ENCODE measurements at regions of chr6 and their contacts with region 1.

Region 1: GRCh38 chr6:132300323-132300949 is 100.8 kb downstream of the MOXD1 start:
- H3K4me3 ChIP-seq: no peak overlapping the region
- H3K27ac ChIP-seq: no peak overlapping the region
- H3K4me1 ChIP-seq: no peaks in the 10 kb centered on the region
- CTCF ChIP-seq: no peak

Region 2: GRCh38 chr6:132190097-132190814 is 110.2 kb before region 1 on chr6:
- CTCF ChIA-PET with region 1: no interaction called
- POLR2A ChIA-PET with region 1: no interaction called
- H3K4me3 ChIP-seq: no peak overlapping the region
- H3K27ac ChIP-seq: no peak overlapping the region
- H3K4me1 ChIP-seq: no peaks in the 10 kb centered on the region
- CTCF ChIP-seq: no peak

Region 3: DNA sequence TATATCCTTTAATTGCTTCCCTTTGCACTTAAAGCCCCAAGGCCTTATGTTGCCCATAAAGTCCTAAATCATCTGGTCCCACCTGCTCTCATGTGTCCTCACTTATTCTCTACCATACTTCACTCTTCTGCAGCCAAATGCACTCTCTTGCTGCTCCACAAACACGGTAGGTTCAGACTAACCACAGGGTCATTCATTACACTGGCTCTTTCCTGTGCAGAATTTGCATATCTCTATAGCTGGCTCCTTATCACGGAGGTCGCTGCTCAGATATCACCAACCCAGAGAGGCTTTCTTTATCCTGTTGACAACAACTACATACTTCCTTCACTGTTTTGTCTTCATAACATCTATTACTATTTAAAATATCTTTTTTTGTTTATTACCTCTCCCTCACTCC is 14.0 kb after region 1 on chr6:
- CTCF ChIA-PET with region 1: interaction called, 11 read pairs
- POLR2A ChIA-PET with region 1: no interaction called
- H3K4me3 ChIP-seq: no peak overlapping the region
- H3K27ac ChIP-seq: no peak overlapping the region
- H3K4me1 ChIP-seq: no peaks in the 10 kb centered on the region
- CTCF ChIP-seq: no peak

Region 4: DNA sequence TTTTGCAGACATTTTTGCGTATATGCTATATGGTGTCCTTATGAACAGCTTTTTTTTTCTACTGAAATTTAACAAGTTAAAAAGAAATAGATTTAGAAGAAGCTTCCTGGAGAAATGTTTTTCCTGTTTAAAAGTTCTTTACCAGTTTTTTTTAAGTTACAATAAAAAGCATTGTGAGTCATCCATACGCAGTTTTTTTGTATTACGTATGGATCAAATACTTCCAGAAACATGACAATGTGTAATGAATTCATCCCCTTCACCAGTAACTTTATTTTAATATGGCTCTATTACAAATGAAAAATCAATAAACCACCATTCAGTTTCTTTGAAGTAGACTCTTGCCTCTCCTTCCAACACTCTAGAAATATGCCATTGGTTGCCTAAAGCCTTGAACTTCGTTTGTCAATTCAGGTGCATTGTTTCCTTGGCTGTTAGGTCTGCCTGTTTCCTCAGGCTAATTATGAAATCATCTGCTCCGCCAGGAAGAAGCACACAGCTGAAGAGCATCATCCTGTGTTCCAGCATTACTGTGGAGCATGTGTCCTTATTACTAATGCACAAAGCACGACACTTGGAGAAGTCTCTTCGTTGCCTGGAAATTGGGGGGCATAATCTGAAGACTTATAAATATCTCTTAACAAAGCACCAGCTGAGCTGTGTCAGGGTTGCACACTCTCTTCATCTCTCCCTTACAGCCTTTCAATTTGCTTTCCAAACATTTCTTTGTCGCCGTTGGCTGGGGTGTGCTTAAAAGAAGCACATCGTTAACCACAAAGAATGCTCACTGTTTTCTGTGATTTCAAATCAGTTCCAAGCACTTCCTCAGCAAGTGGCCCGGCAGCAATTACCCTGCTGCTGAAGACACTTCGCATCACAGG is 91.2 kb after region 1 on chr6:
- CTCF ChIA-PET with region 1: interaction called, 25 read pairs
- POLR2A ChIA-PET with region 1: no interaction called
- H3K4me3 ChIP-seq: no peak overlapping the region
- H3K27ac ChIP-seq: no peak overlapping the region
- H3K4me1 ChIP-seq: peaks cover 10% of the 10 kb centered on the region; the same call in 1 of the 2 replicates
- CTCF ChIP-seq: no peak

Region 5: DNA sequence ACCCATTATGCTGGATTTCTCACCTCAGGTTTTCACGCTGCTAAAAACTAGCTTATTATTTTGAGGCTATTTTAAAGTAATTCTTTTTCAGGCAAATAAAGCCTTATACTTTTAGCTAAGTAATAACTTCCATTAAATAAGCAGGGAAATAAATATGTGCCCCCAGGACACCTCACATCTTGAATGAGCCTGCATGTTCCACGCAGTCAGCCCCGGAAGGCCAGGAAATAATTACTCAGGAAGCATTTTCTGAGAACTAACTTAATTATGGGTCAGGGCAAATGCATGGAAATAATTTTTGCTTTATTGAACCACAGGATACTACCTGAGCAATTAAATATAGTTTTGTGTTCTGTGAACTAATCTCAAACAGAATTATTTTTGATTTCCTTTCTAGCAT is 171.4 kb after region 1 on chr6:
- CTCF ChIA-PET with region 1: interaction called, 15 read pairs
- POLR2A ChIA-PET with region 1: no interaction called
- H3K4me3 ChIP-seq: no peak overlapping the region
- H3K27ac ChIP-seq: no peak overlapping the region
- H3K4me1 ChIP-seq: peaks cover 4% of the 10 kb centered on the region; the same call in 1 of the 2 replicates
- CTCF ChIP-seq: no peak

Region 6: DNA sequence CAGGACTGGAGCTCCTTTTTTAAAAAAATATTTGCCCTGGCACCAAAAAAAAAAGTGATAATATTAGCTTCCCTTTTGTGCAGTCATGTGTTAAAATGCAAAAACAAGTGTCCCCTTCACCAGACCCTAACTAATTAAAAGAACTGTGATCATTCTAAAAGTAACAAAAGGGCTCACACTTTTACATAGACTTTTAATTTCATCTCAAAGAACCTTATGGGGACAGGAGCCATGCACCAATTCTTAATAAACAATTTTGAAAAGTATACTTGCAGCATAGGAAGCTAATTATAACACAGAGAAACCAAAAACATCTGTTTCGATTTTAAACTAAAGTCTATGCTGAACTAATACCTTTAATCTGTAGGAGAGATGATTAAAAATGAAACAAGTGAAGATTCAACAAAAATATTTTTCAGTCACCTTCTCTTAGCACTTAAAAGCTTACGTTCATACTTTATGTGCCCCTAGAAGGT is 195.2 kb after region 1 on chr6:
- CTCF ChIA-PET with region 1: interaction called, 12 read pairs
- POLR2A ChIA-PET with region 1: no interaction called
- H3K4me3 ChIP-seq: no peak overlapping the region
- H3K27ac ChIP-seq: no peak overlapping the region
- H3K4me1 ChIP-seq: no peaks in the 10 kb centered on the region
- CTCF ChIP-seq: no peak